PC-3 (cell line): ENCODE measurements at regions of chr13 and their contacts with region 1.

Region 1: DNA sequence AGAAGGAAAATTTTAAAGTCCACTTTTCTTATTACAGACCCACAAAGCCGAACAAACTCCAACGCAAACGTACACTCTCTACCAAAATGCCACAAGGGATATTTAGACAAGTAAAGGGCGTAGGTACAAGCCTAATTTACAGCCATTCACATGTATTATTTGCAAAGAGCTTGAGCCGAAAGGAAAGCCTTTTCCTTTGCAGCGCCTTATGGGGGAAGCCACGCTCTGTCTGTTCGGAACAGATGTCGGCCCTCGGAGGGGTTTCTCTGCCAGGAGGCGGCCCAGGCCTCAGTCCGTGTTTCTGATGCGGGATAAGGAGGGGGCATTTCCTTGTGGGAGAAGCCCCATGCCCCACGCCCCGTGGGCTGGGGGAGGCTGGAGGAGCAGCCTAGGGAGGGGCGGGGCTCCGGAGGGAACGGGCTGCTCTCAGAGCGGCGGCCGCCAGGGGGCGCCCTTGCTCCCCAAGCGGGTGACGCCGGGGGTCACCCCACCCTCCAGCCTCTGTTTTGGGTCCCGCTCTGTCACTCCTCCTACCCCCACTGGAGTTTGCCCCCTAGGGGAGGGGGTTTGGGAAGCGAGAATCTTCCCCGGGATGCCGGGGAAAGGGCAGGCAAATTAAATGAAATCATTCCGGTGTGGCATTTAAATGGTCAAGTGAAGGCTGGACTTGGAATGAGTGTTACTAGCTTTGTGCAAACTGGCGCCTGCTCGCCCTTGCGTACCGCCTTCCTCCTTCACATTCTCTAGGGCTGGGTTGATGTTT is 2.9 kb downstream of the HTR2A start:
- DNase-seq: peak; percentile 56
- ATAC-seq: peak; percentile 76
- H3K4me3 ChIP-seq: peak overlapping the region; percentile 83
- H3K27ac ChIP-seq: no peak overlapping the region
- H3K4me1 ChIP-seq: peaks cover 20% of the 10 kb centered on the region
- H3K27me3 ChIP-seq: no peaks in the 10 kb centered on the region
- CTCF ChIP-seq: peak; percentile 89

Region 2: GRCh38 chr13:46831588-46832194 is 62.3 kb before region 1 on chr13:
- CTCF ChIA-PET with region 1: no interaction called
- POLR2A ChIA-PET with region 1: no interaction called
- intact Hi-C with region 1: loop called (anchors 5 kb)
- DNase-seq: peak; percentile 71
- ATAC-seq: peak; percentile 54; the same call in 1 of the 2 replicates
- H3K4me3 ChIP-seq: no peak overlapping the region
- H3K27ac ChIP-seq: no peak overlapping the region
- H3K4me1 ChIP-seq: no peaks in the 10 kb centered on the region
- H3K27me3 ChIP-seq: no peaks in the 10 kb centered on the region
- CTCF ChIP-seq: peak; percentile 87

Region 3: DNA sequence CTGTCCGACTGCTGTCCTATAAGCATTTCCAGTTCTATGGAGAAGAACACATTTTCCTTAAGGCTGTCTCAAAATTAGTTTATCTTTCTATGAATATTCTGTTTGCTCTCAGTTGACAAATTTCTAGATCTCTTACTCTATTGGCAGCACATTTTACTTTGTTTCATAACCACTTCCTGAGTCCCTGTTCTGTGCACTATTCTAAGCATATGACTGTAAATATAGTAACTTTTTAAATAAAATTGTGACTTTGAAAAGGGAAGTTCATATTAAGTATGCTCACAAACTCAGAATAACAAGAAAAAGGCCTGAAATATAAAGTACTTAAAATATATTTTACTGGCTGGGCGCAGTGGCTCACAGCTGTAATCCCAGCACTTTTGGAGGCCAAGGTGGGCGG is 59.4 kb after region 1 on chr13:
- CTCF ChIA-PET with region 1: no interaction called
- POLR2A ChIA-PET with region 1: no interaction called
- intact Hi-C with region 1: loop called (anchors 5 kb)
- DNase-seq: peak; percentile 25
- ATAC-seq: no peak
- H3K4me3 ChIP-seq: no peak overlapping the region
- H3K27ac ChIP-seq: peak overlapping the region; percentile 1; the same call in 1 of the 2 replicates
- H3K4me1 ChIP-seq: peaks cover 39% of the 10 kb centered on the region
- H3K27me3 ChIP-seq: no peaks in the 10 kb centered on the region
- CTCF ChIP-seq: no peak

Region 4: DNA sequence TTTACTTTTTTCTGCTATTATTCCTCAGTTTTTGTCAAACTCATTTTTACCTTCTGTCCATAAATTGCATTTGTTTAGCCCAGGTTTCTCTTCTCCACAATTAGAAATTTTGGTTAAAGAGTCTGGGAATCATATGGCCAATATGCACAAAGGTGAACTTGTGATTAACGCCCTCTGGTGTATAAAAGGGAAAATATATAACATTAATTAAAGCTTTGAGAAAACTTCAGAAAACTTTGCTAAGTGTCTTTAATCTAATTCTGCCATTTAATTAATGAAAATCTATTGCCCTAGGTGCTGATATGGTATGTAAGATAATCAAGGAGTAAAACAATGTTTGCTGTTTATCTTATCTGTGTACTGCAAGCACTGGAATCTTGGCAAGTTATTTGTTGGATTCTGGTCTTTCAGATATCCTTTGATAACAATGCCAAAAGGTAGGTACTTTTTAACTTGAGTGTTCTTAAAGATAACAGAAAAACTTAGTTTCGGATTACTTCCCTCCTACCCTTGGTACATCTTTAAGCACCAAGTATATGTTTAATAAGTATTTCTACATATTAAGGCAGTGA is 704.4 kb after region 1 on chr13:
- CTCF ChIA-PET with region 1: interaction called, 3 read pairs
- POLR2A ChIA-PET with region 1: no interaction called
- intact Hi-C with region 1: loop called (anchors 5 kb)
- DNase-seq: peak; percentile 26
- ATAC-seq: no peak
- H3K4me3 ChIP-seq: no peak overlapping the region
- H3K27ac ChIP-seq: no peak overlapping the region
- H3K4me1 ChIP-seq: no peaks in the 10 kb centered on the region
- H3K27me3 ChIP-seq: no peaks in the 10 kb centered on the region
- CTCF ChIP-seq: peak; percentile 59